AG04450 (cell line): ENCODE measurements at regions of chr12 and their contacts with region 1.

Region 1: GRCh38 chr12:13211859-13212664 is 15.5 kb downstream of the EMP1 start:
- DNase-seq: no peak
- H3K4me3 ChIP-seq: no peak overlapping the region
- H3K27ac ChIP-seq: no peak overlapping the region
- H3K27me3 ChIP-seq: no peaks in the 10 kb centered on the region
- CTCF ChIP-seq: peak; percentile 86

Region 2: DNA sequence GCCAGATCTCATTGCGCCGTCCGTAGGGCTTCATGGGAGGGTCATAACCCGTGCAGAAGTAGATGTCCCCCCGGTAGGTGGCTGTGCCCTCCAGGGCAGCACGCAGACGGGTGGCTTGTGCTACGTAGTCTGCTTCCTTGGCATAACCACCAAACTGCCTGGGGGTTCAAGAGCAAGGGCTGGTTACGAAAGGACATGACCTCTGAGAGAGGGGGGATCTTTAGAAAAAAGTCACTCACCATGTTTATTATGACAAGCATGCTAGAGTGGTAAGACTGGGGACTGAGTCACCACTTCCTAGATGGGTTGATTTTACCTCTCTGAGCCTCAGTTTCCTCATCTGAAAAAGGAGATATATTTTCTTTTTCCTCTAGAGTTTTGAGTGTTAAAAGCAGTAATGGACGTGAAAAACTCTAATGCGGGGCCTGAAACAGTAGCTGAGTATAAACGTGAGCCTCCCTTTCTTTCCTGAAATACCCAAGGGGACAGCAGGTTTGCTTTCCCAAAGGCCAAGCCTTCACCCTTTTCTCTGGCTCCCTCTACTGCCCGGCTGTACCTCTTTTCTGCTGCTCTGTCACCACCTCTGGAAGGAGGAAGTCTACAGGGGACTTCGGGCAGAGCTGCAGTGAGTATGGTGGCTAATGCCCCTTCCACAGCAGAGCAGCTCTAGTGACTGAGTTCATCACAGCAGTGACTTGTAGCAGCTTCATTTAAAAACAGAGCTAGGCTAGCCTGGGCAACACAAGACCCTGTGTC is 236.6 kb before region 1 on chr12:
- CTCF ChIA-PET with region 1: interaction called, 67 read pairs
- POLR2A ChIA-PET with region 1: interaction called, 7 read pairs
- DNase-seq: no peak
- H3K4me3 ChIP-seq: no peak overlapping the region
- H3K27ac ChIP-seq: peak overlapping the region; percentile 73
- H3K27me3 ChIP-seq: no peaks in the 10 kb centered on the region
- CTCF ChIP-seq: peak; percentile 59

Region 3: GRCh38 chr12:12999959-13000615 is 212.0 kb before region 1 on chr12 and contains the start of gene HEBP1:
- CTCF ChIA-PET with region 1: interaction called, 39 read pairs
- POLR2A ChIA-PET with region 1: no interaction called
- DNase-seq: peak; percentile 71
- H3K4me3 ChIP-seq: peak within 1 kb of the TSS; percentile 99
- H3K27ac ChIP-seq: peak within 1 kb of the TSS; percentile 77
- H3K27me3 ChIP-seq: no peaks in the 10 kb centered on the region
- CTCF ChIP-seq: no peak
- polyA plus RNA-seq, gene HEBP1: 57.7 and 76.3 TPM in 2 replicates

Region 4: GRCh38 chr12:13044002-13044905 is 167.8 kb before region 1 on chr12 and contains the start of gene FAM234B:
- CTCF ChIA-PET with region 1: interaction called, 35 read pairs
- POLR2A ChIA-PET with region 1: no interaction called
- DNase-seq: no peak
- H3K4me3 ChIP-seq: peak within 1 kb of the TSS; percentile 96
- H3K27ac ChIP-seq: no peak within 1 kb of the TSS
- H3K27me3 ChIP-seq: no peaks in the 10 kb centered on the region
- CTCF ChIP-seq: peak; percentile 6; the same call in 1 of the 2 replicates
- polyA plus RNA-seq, gene FAM234B: 6.1 and 7.3 TPM in 2 replicates

Region 5: GRCh38 chr12:13100882-13101769 is 110.9 kb before region 1 on chr12:
- CTCF ChIA-PET with region 1: interaction called, 63 read pairs
- POLR2A ChIA-PET with region 1: interaction called, 9 read pairs
- DNase-seq: peak; percentile 82
- H3K4me3 ChIP-seq: peak overlapping the region; percentile 53
- H3K27ac ChIP-seq: peak overlapping the region; percentile 98
- H3K27me3 ChIP-seq: no peaks in the 10 kb centered on the region
- CTCF ChIP-seq: no peak

Region 6: DNA sequence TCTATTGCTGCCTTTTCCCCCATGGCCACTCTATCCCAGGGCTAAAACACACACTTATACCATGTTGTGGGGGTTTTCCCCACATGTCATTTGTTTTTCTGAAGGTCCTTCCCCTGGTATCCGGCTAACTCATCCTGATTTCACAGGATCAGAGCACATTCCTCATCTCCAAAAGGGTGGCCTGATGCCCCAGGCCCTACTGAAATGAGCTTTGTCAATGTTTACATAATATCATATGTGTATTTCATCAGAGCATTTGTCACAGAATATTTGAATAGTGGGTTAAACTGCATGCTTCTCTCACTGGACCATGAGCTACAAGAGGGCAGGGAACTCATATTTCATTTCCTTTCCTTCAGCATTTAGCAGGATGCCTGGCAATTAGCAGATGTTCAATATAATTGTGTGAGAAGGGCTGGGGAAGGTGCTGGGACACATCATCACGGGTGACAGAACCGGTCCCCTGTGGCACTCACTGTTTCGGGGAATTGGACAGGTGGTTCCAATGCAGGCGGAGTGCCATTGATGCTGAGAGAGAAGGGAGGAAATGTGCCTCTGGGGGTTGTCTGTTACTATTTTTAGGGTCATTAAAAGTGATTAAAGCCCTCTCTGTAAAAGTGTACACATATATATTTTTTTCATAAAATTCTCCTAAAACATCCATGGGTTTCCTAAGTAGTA is 11.3 kb after region 1 on chr12:
- CTCF ChIA-PET with region 1: interaction called, 40 read pairs
- POLR2A ChIA-PET with region 1: interaction called, 5 read pairs
- DNase-seq: peak; percentile 69
- H3K4me3 ChIP-seq: no peak overlapping the region
- H3K27ac ChIP-seq: peak overlapping the region; percentile 83
- H3K27me3 ChIP-seq: no peaks in the 10 kb centered on the region
- CTCF ChIP-seq: no peak

Region 7: DNA sequence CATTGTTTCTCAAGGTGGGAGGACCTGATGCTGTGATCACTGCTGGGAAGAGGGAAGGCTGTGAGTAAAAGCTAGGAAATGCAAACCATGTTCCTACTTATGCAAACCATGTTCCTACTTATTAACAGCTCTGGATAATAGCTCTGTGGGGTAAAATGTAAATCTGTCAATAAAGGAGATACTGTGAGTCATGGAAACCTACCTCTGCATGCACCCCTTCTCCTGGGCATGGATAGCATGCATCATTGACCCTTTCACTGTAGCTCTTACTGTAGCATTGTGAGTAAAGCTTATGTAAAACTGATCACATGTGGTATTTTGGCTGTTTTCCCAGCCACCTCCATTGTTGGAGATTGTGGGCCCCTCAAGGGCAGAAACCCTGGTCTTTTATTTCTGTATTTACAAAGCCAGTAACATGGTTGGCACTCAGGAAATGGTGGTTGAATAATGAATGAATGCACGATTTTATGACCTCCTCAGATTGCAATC is 515.7 kb after region 1 on chr12:
- CTCF ChIA-PET with region 1: no interaction called
- POLR2A ChIA-PET with region 1: no interaction called
- DNase-seq: no peak
- H3K4me3 ChIP-seq: no peak overlapping the region
- H3K27ac ChIP-seq: no peak overlapping the region
- H3K27me3 ChIP-seq: no peaks in the 10 kb centered on the region
- CTCF ChIP-seq: no peak